ENCODE measurements at regions of chr15 and their contacts with region 1.

Region 1: DNA sequence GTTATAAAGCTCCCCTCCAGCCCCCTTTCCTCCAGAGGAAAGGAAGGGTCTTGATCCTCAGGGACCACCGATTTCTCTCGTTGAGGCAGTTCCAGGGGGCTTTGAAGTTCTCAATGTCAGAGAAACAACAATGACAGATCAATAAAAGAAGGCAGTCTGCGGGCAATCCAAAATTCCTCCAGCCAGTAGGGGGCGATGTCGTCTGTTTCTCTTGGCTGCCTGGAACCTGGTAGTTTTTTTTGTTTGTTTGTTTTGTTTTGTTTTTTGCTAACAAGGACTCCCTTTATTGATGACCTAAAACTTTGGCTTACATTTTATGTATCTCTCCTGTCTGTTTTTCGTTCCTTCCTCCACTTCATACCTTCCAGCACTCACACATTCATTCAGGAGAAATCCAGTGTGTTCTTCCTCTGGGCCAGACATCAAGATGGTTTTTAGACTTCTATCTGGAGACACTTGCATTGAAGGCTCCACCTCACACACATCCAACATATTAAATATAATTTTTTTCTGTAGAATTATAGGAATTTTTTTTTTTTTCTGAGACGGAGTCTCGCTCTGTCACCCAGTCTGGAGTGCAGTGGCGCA is 276.6 kb downstream of the RPLP1 start:
- DNase-seq: peak; percentile 58
- ATAC-seq: no peak

Region 2: DNA sequence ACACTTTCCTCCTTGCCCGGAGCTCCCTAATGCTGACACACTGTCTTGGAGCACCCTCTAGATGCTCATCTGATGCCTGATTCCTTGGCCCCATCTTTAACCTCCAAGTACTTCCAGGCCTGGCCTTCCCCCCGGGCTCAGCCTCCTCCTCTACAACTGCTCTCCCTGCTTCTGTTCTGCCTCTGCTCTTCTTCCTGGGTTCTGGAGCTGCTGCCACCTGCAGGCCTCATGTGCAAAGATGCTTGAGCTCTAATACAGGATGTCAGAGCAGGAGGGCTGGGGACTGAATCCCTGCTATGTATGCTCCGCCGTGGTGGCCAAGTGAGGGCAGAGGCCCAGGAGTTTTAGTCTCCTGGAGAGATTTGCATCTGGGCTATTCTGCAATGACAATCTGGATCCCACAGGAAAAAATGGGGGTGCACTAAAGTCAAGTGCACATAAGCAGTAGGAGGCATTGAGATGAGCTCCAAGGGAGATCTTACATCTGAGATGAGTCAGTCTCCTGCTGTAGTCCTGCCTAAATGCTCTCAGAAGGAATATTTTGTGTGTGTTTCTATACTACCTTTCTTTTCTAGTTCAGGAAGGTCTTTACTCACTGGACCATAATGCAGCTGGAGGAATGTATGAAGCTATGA is 737.8 kb after region 1 on chr15:
- intact Hi-C with region 1: loop called (anchors 5 kb)
- DNase-seq: peak; percentile 70
- ATAC-seq: peak; percentile 75

Region 3: DNA sequence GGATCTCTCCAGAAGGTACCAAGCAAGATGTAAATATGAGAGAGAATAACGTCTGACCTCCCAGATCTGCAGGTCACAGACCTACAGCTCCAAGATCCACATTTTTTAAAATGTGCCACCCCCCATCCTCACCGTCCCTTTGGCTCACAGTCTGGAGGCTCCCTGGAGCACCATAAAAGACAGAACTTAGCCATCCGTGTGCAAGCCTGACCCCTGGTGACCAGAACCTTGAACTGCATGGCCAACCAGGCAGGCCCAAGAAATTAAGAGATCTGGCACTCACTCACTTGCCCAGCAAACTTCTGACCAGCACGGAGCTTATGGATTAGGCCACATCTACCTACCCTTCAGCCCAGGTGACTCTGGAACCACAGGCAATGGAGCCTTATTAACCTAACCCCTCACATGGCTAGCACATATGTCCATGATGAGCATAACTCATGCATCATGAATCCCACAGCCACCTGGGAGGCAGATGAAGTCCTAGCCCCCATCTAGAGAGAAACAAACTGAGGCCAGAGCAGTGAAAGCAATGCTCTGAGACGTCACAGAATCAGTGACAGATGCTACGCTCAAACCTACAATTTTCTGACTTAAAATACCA is 758.8 kb after region 1 on chr15:
- intact Hi-C with region 1: loop called (anchors 5 kb)
- DNase-seq: peak; percentile 83
- ATAC-seq: peak; percentile 63